ENCODE measurements at regions of chr7 and their contacts with region 1.

Region 1: GRCh38 chr7:139995017-139995931 is 67.5 kb downstream of the PARP12 start:
- DNase-seq: peak; percentile 24
- ATAC-seq: peak; percentile 68
- H3K4me3 ChIP-seq: no peak overlapping the region
- H3K27ac ChIP-seq: no peak overlapping the region
- H3K4me1 ChIP-seq: peaks cover 6% of the 10 kb centered on the region; the same call in 1 of the 2 replicates
- H3K27me3 ChIP-seq: no peaks in the 10 kb centered on the region
- CTCF ChIP-seq: no peak

Region 2: DNA sequence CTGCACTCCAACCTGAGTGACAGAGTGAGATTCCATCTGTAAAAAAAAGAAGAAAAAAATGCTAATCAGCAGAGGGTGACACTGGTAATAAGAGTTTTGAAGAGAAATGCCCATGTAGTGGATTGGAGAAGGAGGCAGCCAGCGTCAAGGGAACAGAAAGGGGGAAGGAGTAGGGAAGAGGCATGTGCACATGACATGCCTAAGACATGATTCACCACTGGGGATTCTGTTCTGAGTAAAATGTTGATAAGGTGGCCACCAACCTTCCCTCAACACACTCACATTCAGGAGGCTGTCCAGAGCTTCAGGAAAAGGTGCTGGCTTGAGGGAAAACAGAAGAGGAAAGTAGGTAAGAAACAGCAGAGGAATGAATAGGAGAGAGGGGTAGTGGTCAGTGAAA is 1879.1 kb before region 1 on chr7:
- CTCF ChIA-PET with region 1: interaction called, 11 read pairs
- POLR2A ChIA-PET with region 1: no interaction called
- intact Hi-C with region 1: no loop called
- DNase-seq: peak; percentile 68
- ATAC-seq: peak; percentile 38; the same call in 1 of the 2 replicates
- H3K4me3 ChIP-seq: no peak overlapping the region
- H3K27ac ChIP-seq: no peak overlapping the region
- H3K4me1 ChIP-seq: peaks cover 6% of the 10 kb centered on the region; the same call in 1 of the 2 replicates
- H3K27me3 ChIP-seq: no peaks in the 10 kb centered on the region
- CTCF ChIP-seq: no peak

Measured in PC-3 (cell line).